Left colon (tissue), 2 donors: ENCODE measurements at regions of chr12 and their contacts with region 1.

Region 1: DNA sequence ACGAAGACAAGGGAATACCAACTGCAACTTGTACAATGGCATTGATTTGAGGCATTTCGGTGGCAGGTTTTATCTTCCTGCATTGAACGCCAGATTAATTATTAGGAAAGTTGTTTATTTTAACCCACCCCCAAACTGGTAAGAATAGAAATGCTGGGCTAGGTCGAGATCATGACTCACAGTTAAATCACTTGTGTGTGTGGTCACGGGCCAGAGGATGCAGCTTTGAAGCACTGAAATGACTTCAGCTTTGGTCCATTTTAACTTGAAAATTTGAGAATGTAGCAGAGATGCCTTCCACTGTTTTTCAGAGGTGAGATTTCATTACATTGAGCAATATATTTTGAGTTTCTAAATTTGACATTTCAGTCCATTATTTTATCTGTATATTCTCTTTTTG is 23.6 kb upstream of the KCNH3 start:
- DNase-seq: no peak
- ATAC-seq: no peak

Region 2: GRCh38 chr12:49342066-49342913 is 173.0 kb before region 1 on chr12:
- intact Hi-C with region 1: loop called in 1 of 2 experiments (anchors 10 kb)
- DNase-seq: peak; percentile 80 to 86
- ATAC-seq: peak; percentile 66

Region 3: GRCh38 chr12:49358483-49359141 is 156.7 kb before region 1 on chr12:
- intact Hi-C with region 1: loop called (anchors 1 to 5 kb)
- DNase-seq: peak in 1 of 2 donors; percentile 53
- ATAC-seq: peak; percentile 80

Region 4: GRCh38 chr12:49364989-49365388 is 150.3 kb before region 1 on chr12:
- intact Hi-C with region 1: loop called in 1 of 2 experiments (anchors 5 kb)
- DNase-seq: no peak
- ATAC-seq: no peak